MCF 10A (cell line): ENCODE measurements at regions of chr17 and their contacts with region 1.

Region 1: GRCh38 chr17:27601069-27601975 is 29.7 kb upstream of the LGALS9 start:
- DNase-seq: peak; percentile 79
- H3K4me3 Mint-ChIP-seq: no peak overlapping the region
- H3K27ac Mint-ChIP-seq: no peak overlapping the region
- H3K4me1 Mint-ChIP-seq: peaks cover 21% of the 10 kb centered on the region
- H3K27me3 Mint-ChIP-seq: no peaks in the 10 kb centered on the region
- CTCF ChIP-seq: peak; percentile 93

Region 2: GRCh38 chr17:27236717-27237315 is 364.5 kb before region 1 on chr17:
- CTCF ChIA-PET with region 1: interaction called, 229 read pairs
- POLR2A ChIA-PET with region 1: interaction called, 3 read pairs
- intact Hi-C with region 1: loop called (anchors 5 kb)
- DNase-seq: peak; percentile 77
- H3K4me3 Mint-ChIP-seq: no peak overlapping the region
- H3K27ac Mint-ChIP-seq: no peak overlapping the region
- H3K4me1 Mint-ChIP-seq: peaks cover 8% of the 10 kb centered on the region
- H3K27me3 Mint-ChIP-seq: no peaks in the 10 kb centered on the region
- CTCF ChIP-seq: peak; percentile 93

Region 3: GRCh38 chr17:27353461-27354050 is 247.8 kb before region 1 on chr17:
- CTCF ChIA-PET with region 1: interaction called, 102 read pairs
- POLR2A ChIA-PET with region 1: interaction called, 7 read pairs
- intact Hi-C with region 1: loop called (anchors 1 kb)
- DNase-seq: peak; percentile 92
- H3K4me3 Mint-ChIP-seq: peak overlapping the region; percentile 85
- H3K27ac Mint-ChIP-seq: peak overlapping the region; percentile 97
- H3K4me1 Mint-ChIP-seq: peaks cover 19% of the 10 kb centered on the region
- H3K27me3 Mint-ChIP-seq: no peaks in the 10 kb centered on the region
- CTCF ChIP-seq: peak; percentile 95

Region 4: GRCh38 chr17:27413315-27413714 is 188.0 kb before region 1 on chr17:
- CTCF ChIA-PET with region 1: interaction called, 28 read pairs
- POLR2A ChIA-PET with region 1: no interaction called
- intact Hi-C with region 1: no loop called
- DNase-seq: no peak
- H3K4me3 Mint-ChIP-seq: no peak overlapping the region
- H3K27ac Mint-ChIP-seq: no peak overlapping the region
- H3K4me1 Mint-ChIP-seq: peaks cover 10% of the 10 kb centered on the region
- H3K27me3 Mint-ChIP-seq: peaks cover 8% of the 10 kb centered on the region
- CTCF ChIP-seq: no peak

Region 5: GRCh38 chr17:27569257-27569722 is 32.0 kb before region 1 on chr17:
- CTCF ChIA-PET with region 1: interaction called, 19 read pairs
- POLR2A ChIA-PET with region 1: no interaction called
- intact Hi-C with region 1: no loop called
- DNase-seq: peak; percentile 61
- H3K4me3 Mint-ChIP-seq: no peak overlapping the region
- H3K27ac Mint-ChIP-seq: peak overlapping the region; percentile 13
- H3K4me1 Mint-ChIP-seq: peaks cover 8% of the 10 kb centered on the region
- H3K27me3 Mint-ChIP-seq: no peaks in the 10 kb centered on the region
- CTCF ChIP-seq: peak; percentile 35

Region 6: GRCh38 chr17:27654654-27655524 is 53.6 kb after region 1 on chr17:
- CTCF ChIA-PET with region 1: interaction called, 580 read pairs
- POLR2A ChIA-PET with region 1: no interaction called
- intact Hi-C with region 1: loop called (anchors 1 kb)
- DNase-seq: peak; percentile 65
- H3K4me3 Mint-ChIP-seq: no peak overlapping the region
- H3K27ac Mint-ChIP-seq: no peak overlapping the region
- H3K4me1 Mint-ChIP-seq: no peaks in the 10 kb centered on the region
- H3K27me3 Mint-ChIP-seq: peaks cover 13% of the 10 kb centered on the region
- CTCF ChIP-seq: peak; percentile 93

Region 7: DNA sequence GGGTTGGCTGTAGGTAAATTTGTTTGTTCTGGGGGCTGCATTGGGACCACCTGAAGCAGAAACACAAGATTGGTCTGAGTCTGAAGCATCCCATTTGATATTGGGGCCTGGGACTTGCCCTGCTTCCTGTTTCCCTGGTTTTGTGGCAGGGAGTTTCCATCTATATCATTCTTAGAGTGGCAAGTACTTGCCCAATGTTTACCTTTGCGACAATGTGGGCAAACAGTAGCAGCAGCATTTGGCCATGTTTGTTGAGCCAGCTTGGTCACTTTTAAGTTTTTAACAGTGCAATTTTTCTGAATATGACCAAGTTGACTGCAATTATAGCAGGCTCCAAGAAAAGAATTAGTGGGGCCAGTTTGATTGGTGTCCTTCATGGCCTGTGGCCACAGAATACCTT is 91.4 kb after region 1 on chr17:
- CTCF ChIA-PET with region 1: no interaction called
- POLR2A ChIA-PET with region 1: no interaction called
- intact Hi-C with region 1: no loop called
- DNase-seq: no peak
- H3K4me3 Mint-ChIP-seq: no peak overlapping the region
- H3K27ac Mint-ChIP-seq: no peak overlapping the region
- H3K4me1 Mint-ChIP-seq: no peaks in the 10 kb centered on the region
- H3K27me3 Mint-ChIP-seq: peaks cover 13% of the 10 kb centered on the region
- CTCF ChIP-seq: no peak

Region 8: GRCh38 chr17:28057731-28058279 is 456.5 kb after region 1 on chr17:
- CTCF ChIA-PET with region 1: no interaction called
- POLR2A ChIA-PET with region 1: no interaction called
- intact Hi-C with region 1: no loop called
- DNase-seq: peak; percentile 64
- H3K4me3 Mint-ChIP-seq: peak overlapping the region; percentile 44
- H3K27ac Mint-ChIP-seq: peak overlapping the region; percentile 75
- H3K4me1 Mint-ChIP-seq: peaks cover 14% of the 10 kb centered on the region
- H3K27me3 Mint-ChIP-seq: no peaks in the 10 kb centered on the region
- CTCF ChIP-seq: no peak